Sciatic nerve (tissue), 2 donors: ENCODE measurements at regions of chr7 and their contacts with region 1.

Region 1: DNA sequence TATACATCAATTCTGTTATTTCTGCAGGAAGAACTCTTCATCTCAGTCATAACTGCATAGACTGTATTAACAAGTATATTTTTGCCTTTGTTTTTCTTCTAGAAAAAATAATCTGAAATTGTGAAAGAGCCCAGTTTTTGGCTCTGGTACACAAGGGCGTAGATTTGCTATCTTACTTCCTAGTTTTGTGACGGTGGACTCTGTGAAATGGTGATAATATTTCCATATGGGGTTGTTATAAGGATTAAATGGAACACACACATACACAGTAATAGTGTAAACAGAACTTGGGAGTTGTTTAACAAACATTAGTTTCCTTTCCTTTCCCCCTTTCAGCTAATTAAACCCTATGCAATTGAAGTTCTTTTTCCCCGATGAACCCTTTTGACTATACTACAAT is 108.7 kb downstream of the MKLN1 start:
- DNase-seq: no peak
- ATAC-seq: no peak

Region 2: DNA sequence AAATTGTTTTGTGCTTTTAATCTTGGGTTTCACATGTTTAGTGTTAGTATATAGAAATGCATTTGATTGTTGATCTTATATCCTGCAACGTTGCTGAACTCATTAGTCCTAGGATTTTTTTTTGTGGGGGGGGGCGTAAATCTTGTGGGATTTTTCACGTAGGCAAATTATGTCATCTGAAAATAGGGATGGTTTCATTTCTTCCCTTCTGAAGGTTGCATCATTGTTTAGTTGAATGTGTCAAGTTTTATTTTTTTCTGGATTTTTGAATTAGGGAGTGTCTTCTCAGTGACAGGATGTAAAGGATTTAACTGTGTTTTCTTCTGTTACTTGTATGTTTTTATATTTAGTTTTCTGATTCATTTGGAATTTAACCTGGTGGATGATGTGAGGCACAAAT is 82.0 kb before region 1 on chr7:
- intact Hi-C with region 1: loop called (anchors 5 kb)
- DNase-seq: no peak
- ATAC-seq: no peak

Region 3: DNA sequence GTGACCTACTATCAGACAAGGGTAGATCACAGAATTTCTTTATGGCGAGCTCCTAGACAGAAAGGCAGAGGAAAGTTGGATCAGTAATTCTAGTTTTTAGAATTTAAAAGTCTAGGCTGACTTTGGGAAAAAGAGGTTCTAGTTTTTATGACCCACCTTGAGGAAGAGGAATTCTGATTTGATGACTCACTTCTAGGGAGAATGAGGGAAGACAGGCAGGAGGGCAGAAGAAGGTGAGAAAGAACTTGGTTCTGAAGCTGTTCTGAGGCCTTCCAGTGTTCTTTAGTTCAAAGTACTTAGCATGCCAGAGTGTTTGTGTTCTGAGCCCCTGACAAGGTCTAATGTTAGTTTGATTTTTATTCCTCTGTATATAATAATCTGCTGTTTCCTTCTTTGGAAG is 22.9 kb after region 1 on chr7:
- intact Hi-C with region 1: no loop called
- DNase-seq: no peak
- ATAC-seq: no peak

Region 4: GRCh38 chr7:131521651-131522163 is 85.3 kb after region 1 on chr7:
- intact Hi-C with region 1: no loop called
- DNase-seq: no peak
- ATAC-seq: peak; percentile 71